Left colon (tissue), 2 donors: ENCODE measurements at regions of chr1 and their contacts with region 1.

Region 1: DNA sequence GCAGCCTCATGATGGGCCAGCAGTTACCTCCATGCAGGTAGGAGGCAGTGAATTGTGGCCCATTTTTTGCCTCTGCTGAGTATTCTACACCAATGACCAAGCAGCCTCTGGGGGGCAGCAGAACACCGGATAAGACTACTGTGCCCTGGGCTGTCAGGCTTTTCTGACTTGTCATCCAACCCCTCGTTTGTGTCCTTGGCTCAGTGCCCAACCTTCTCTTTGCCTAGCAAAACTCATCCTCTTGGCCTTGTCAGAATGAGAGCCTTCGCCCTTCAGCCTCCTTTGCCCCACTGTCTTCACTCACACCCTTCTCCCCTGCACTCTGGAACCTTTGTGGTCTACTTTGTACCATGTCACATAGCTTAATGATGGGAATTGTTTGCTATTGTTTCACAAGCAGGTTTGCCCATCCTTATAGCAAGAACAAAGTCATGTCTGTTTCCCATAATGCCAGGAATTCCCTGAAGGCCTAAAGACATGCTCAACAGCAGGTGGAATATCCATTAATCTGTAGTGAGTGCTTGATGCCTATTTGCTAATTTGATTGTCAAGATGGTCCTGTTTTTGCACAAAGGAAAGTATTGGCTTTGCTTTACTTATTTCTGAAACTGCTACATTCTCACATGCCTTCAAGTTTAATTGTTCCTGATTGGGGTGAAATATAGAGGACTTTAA is 255.9 kb downstream of the HHAT start:
- DNase-seq: peak; percentile 58 to 88
- ATAC-seq: peak; percentile 90

Region 2: DNA sequence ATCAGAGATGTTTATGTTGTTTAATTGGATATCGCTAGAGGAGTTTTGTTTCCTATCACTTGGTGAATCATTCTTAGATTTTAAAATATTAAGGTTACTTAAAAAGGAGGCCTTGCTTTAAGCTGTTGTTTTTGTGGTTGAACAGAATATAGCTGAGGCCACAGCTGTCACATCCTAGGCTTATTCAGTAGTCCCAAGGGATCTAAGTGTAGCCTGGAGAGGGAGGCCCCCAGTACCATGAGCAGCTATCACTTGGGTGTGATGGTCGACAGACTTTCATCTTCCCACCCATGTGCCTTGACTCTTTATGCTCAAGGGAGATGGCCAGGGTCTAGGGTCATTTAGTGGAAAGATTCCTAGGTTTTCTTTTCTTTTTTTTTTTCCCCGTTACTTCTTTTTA is 22.8 kb after region 1 on chr1:
- intact Hi-C with region 1: no loop called
- DNase-seq: no peak
- ATAC-seq: no peak

Region 3: DNA sequence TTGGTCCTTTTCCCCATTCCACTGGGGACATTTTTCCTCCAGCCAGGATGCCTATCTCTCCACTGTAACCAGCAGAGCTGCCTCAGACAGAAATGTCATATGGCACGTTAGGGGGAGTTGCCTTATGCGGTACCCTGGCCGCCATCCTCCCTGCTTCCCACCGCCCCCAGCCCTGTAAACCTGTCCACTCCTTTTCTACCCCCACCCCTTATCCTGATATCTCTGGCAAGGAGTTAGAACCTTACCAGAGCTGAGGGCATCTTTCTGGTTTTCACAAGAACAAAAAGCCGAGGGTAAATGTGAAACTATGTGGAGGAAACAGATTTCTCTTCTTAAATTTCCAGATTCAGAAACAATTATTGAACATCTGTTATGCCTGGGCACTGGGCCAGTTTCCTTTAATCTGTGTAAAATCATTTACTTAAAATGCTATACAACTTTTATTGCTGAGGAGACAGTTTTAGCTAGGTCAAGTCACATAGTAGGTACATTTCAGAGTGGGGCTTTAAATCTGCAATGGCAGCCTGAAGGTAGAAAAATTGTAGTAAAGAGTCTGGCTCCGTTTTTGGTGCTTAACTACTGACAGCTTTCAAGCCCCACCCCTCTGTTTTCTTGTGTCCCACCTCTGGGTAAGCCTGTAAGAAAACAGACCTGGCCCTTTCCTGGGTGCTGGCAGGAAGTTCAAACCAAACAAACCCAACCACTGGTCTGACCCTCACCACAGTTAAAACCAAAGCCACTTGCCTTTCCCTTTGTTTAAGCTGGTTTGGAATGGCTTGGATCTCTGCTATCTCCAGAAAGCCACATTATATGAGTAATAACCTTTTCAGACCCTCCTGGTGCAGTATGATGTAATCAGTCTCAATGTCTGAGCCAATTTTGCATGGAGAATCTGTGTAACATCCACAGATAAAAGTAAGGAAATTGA is 63.1 kb after region 1 on chr1:
- intact Hi-C with region 1: no loop called
- DNase-seq: no peak
- ATAC-seq: no peak

Region 4: GRCh38 chr1:210764536-210764935 is 180.0 kb after region 1 on chr1:
- intact Hi-C with region 1: no loop called
- DNase-seq: no peak
- ATAC-seq: no peak

Region 5: GRCh38 chr1:211133836-211134669 is 549.5 kb after region 1 on chr1 and contains the start of gene KCNH1:
- intact Hi-C with region 1: loop called in 1 of 2 experiments (anchors 2 kb)
- DNase-seq: peak; percentile 38 to 74
- ATAC-seq: peak; percentile 91
- total RNA-seq, gene KCNH1: 0.27 to 0.70 TPM